ENCODE measurements at regions of chr6 and their contacts with region 1.

Region 1: GRCh38 chr6:88165844-88166492 is at the start of gene CNR1:
- DNase-seq: peak in 6 of 10 donors; percentile 31 to 67 (median 50)
- H3K4me3 ChIP-seq: peak within 1 kb of the TSS; percentile 41 to 81 (median 67)
- H3K27ac ChIP-seq: peak within 1 kb of the TSS in 56 of 59 donors; percentile 8 to 90 (median 76)
- H3K27me3 ChIP-seq: peaks cover 0 to 65% (median 22%) of the 10 kb centered on the region in 45 donors
- CTCF ChIP-seq: peak in 3 of 56 donors; percentile 9 to 22 (median 16)
- total RNA-seq, gene CNR1: 10.5 to 114 (median 59.2) TPM

Region 2: DNA sequence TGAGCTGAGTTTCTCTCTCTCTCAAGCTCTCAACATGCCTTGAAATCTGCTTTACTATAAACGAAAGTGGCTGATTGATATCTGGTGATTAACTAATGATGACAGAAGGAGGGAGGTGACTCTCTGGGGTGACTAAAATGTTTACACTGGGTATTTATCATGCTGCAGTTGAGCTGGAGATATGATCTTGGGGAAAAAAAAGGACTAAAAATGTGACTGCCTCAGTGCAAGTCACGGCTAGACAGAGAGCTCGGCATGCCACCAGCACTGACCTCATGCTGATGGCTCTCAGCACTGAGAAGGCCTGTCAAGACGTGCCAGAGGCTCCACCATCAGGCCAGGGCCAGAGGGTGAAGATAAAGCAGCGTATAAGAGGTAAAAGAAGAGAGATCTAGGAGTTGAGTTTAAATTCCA is 221.4 kb before region 1 on chr6:
- intact Hi-C with region 1: loop called in 1 of 2 experiments (anchors 10 kb)
- DNase-seq: peak in 9 of 10 donors; percentile 28 to 71 (median 51)
- H3K4me3 ChIP-seq: no peak overlapping the region
- H3K27ac ChIP-seq: peak overlapping the region in 50 of 59 donors; percentile 4 to 87 (median 61)
- H3K27me3 ChIP-seq: peaks cover 0 to 9% (median 0%) of the 10 kb centered on the region in 45 donors
- CTCF ChIP-seq: peak in 22 of 56 donors; percentile 9 to 53 (median 30)

Region 3: GRCh38 chr6:88492824-88493223 is 326.9 kb after region 1 on chr6:
- intact Hi-C with region 1: no loop called
- DNase-seq: no peak
- H3K4me3 ChIP-seq: no peak overlapping the region
- H3K27ac ChIP-seq: no peak overlapping the region
- H3K27me3 ChIP-seq: no peaks in the 10 kb centered on the region
- CTCF ChIP-seq: peak in 48 of 56 donors; percentile 18 to 61 (median 41)